Mammary epithelial cell (primary cell): ENCODE measurements at regions of chr2 and their contacts with region 1.

Region 1: DNA sequence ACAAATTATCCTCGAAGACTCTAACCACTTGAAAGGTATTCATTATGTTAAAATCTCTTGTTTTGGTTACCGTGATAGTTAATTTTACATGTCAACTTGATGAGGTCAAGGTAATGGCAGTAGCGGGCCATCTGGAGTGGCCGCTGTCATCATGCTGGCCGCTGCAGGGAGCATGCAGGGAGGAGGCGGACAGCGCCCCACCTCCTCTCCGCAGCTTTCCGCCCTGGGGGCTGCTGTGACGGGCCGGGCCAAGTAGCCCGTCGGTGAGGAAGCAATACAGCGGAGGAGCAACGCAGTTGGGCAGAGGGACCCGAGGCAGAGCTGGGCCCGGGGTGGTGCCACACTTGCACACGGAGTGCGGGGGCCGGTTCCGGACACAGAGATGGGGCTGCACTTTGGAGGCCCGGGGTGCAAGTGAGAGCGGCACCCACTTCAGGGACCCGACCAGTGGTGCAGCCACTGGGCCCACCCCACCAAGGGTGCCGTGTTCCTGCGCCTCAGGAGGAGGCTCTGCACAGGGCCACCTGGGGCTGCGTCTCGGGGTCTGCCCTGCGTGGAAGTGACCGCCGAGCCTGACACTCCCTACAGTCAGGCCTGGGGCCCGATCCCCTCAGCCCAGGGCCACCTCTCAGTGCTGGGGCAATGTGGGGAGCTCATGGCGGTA is 452.4 kb downstream of the LRATD1 start:
- DNase-seq: no peak
- H3K4me3 ChIP-seq: no peak overlapping the region
- H3K27ac ChIP-seq: no peak overlapping the region
- H3K4me1 ChIP-seq: no peaks in the 10 kb centered on the region
- H3K27me3 ChIP-seq: no peaks in the 10 kb centered on the region
- CTCF ChIP-seq: no peak

Region 2: GRCh38 chr2:15031745-15032240 is 53.2 kb before region 1 on chr2:
- CTCF ChIA-PET with region 1: no interaction called
- dilution Hi-C with region 1: loop called (anchors 10 kb)
- in situ Hi-C with region 1: no loop called
- intact Hi-C with region 1: no loop called
- DNase-seq: no peak
- H3K4me3 ChIP-seq: no peak overlapping the region
- H3K27ac ChIP-seq: no peak overlapping the region
- H3K4me1 ChIP-seq: no peaks in the 10 kb centered on the region
- H3K27me3 ChIP-seq: no peaks in the 10 kb centered on the region
- CTCF ChIP-seq: peak in 1 of 2 donors; percentile 2

Region 3: DNA sequence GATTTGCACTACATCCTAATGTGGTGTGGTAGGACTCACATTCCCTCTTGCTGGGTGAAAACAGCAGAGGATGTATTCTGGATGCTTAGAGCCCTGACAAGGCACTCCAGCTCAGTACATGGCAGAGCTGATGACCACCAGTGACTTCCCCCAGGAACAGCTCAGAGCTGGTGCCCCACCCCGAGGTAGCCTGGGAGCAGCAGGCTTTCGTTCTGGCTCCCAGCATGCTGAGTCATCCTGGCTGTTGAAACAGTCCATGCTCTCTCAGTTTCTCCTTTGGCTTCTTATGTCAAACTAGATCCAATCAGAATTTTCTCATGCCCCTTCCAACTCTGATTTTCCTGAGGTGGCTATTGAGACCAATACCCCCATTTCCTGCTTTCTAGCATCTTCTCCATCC is 38.0 kb after region 1 on chr2:
- CTCF ChIA-PET with region 1: no interaction called
- dilution Hi-C with region 1: no loop called
- in situ Hi-C with region 1: no loop called
- intact Hi-C with region 1: no loop called
- DNase-seq: peak; percentile 26
- H3K4me3 ChIP-seq: no peak overlapping the region
- H3K27ac ChIP-seq: no peak overlapping the region
- H3K4me1 ChIP-seq: no peaks in the 10 kb centered on the region
- H3K27me3 ChIP-seq: no peaks in the 10 kb centered on the region
- CTCF ChIP-seq: no peak